ENCODE measurements at regions of chr10 and their contacts with region 1.

Region 1: DNA sequence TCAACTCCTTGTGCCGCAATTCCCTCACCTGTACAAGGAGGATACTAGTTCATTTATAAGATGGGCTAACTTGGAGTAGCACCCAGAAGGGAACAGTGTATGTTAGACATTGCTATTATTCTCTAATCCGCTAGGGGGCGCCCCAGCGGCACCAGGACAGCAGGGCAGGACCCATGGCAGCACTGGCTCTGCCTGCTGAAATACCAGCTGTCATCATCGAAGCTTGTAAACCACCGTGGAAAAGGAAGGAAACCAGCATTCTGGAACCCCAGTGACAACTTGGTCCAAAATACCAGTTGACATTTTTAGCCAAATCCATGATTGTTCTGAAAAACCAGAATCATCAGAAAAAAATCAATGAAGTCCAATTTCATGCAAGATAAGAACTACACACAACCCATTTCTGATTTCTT is 134.4 kb downstream of the ITGA8 start:
- DNase-seq: peak; percentile 80
- H3K4me3 ChIP-seq: no peak overlapping the region
- H3K27ac ChIP-seq: no peak overlapping the region
- H3K4me1 ChIP-seq: peaks cover 9% of the 10 kb centered on the region
- H3K27me3 ChIP-seq: no peaks in the 10 kb centered on the region
- CTCF ChIP-seq: peak; percentile 89 to 93
- POLR2A ChIP-seq: no peak

Region 2: GRCh38 chr10:15630353-15630752 is 45.0 kb after region 1 on chr10:
- CTCF ChIA-PET with region 1: interaction called, 6 read pairs
- POLR2A ChIA-PET with region 1: no interaction called
- dilution Hi-C with region 1: no loop called
- intact Hi-C with region 1: loop called (anchors 1 kb)
- DNase-seq: peak; percentile 94
- H3K4me3 ChIP-seq: no peak overlapping the region
- H3K27ac ChIP-seq: peak overlapping the region; percentile 6
- H3K4me1 ChIP-seq: peaks cover 23% of the 10 kb centered on the region
- H3K27me3 ChIP-seq: no peaks in the 10 kb centered on the region
- CTCF ChIP-seq: no peak
- POLR2A ChIP-seq: no peak

Region 3: GRCh38 chr10:15642095-15642494 is 56.8 kb after region 1 on chr10:
- CTCF ChIA-PET with region 1: interaction called, 10 read pairs
- POLR2A ChIA-PET with region 1: no interaction called
- dilution Hi-C with region 1: no loop called
- intact Hi-C with region 1: no loop called
- DNase-seq: peak; percentile 67
- H3K4me3 ChIP-seq: no peak overlapping the region
- H3K27ac ChIP-seq: no peak overlapping the region
- H3K4me1 ChIP-seq: peaks cover 8% of the 10 kb centered on the region
- H3K27me3 ChIP-seq: no peaks in the 10 kb centered on the region
- CTCF ChIP-seq: no peak
- POLR2A ChIP-seq: no peak